ENCODE measurements at regions of chr6 and their contacts with region 1.

Region 1: GRCh38 chr6:3068329-3069214 is at the start of gene RIPK1:
- DNase-seq: peak; percentile 97
- H3K4me3 ChIP-seq: peak within 1 kb of the TSS; percentile 72 to 99 (median 99)
- H3K27ac ChIP-seq: peak within 1 kb of the TSS; percentile 98 to 100 (median 100)
- H3K4me1 ChIP-seq: peaks cover 0 to 44% (median 33%) of the 10 kb centered on the region in 4 donors
- H3K27me3 ChIP-seq: no peaks in the 10 kb centered on the region
- CTCF ChIP-seq: peak in 2 of 4 experiments; percentile 11 to 17
- EP300 ChIP-seq: no peak
- POLR2A ChIP-seq: peak; percentile 77 to 83
- total RNA-seq, gene RIPK1: 19.7 to 27.3 (median 22.7) TPM

Region 2: DNA sequence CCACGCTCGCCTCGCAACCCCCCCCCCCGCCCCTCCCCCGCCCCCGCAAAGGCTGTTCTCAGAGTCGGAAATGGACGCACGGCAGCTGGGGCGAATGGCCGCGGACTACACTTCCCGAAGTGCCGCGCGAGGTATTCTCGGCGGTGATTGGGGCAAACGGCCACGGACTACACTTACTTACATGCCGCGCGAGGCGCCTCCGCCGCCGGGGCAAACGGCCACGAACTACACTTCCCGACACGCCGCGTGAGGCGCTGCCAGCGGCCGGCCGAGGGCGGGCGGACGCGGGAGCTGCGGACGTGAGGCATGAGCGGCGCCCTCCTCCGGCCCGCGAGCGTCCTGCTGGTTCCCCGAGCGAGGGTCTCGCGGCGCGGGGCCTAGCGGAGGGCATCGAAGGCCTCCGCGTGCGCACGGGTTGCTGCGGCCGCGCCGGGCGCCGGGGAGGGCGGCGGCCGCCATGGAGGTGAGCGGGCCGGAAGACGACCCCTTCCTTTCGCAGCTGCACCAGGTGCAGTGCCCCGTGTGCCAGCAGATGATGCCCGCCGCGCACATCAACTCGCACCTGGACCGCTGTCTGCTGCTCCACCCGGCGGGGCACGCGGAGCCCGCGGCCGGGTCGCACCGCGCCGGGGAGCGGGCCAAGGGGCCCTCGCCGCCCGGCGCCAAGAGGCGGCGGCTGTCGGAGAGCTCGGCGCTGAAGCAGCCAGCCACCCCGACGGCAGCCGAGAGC is 303.2 kb before region 1 on chr6 and contains the start of gene WRNIP1:
- intact Hi-C with region 1: loop called (anchors 5 kb)
- DNase-seq: peak; percentile 100
- H3K4me3 ChIP-seq: peak within 1 kb of the TSS; percentile 61 to 96 (median 90)
- H3K27ac ChIP-seq: peak within 1 kb of the TSS; percentile 94 to 98 (median 96)
- H3K4me1 ChIP-seq: peaks cover 0 to 48% (median 36%) of the 10 kb centered on the region in 4 donors
- H3K27me3 ChIP-seq: no peaks in the 10 kb centered on the region
- CTCF ChIP-seq: peak in 3 of 4 experiments; percentile 8 to 67 (median 21)
- EP300 ChIP-seq: no peak
- POLR2A ChIP-seq: no peak
- total RNA-seq, gene WRNIP1: 41.0 to 56.6 (median 47.9) TPM

Region 3: GRCh38 chr6:2848851-2849250 is 219.7 kb before region 1 on chr6:
- intact Hi-C with region 1: loop called (anchors 5 kb)
- DNase-seq: no peak
- H3K4me3 ChIP-seq: no peak overlapping the region
- H3K27ac ChIP-seq: no peak overlapping the region
- H3K4me1 ChIP-seq: peaks cover 0 to 13% (median 7%) of the 10 kb centered on the region in 4 donors
- H3K27me3 ChIP-seq: no peaks in the 10 kb centered on the region
- CTCF ChIP-seq: no peak
- EP300 ChIP-seq: no peak
- POLR2A ChIP-seq: no peak

Region 4: GRCh38 chr6:3031857-3032640 is 36.5 kb before region 1 on chr6:
- intact Hi-C with region 1: no loop called
- DNase-seq: no peak
- H3K4me3 ChIP-seq: no peak overlapping the region
- H3K27ac ChIP-seq: no peak overlapping the region
- H3K4me1 ChIP-seq: no peaks in the 10 kb centered on the region
- H3K27me3 ChIP-seq: no peaks in the 10 kb centered on the region
- CTCF ChIP-seq: no peak
- EP300 ChIP-seq: no peak
- POLR2A ChIP-seq: no peak

Region 5: GRCh38 chr6:3118353-3119039 is 49.9 kb after region 1 on chr6 and contains the start of gene BPHL:
- intact Hi-C with region 1: loop called (anchors 1 kb)
- DNase-seq: peak; percentile 98
- H3K4me3 ChIP-seq: peak within 1 kb of the TSS; percentile 53 to 91 (median 84)
- H3K27ac ChIP-seq: peak within 1 kb of the TSS; percentile 88 to 94 (median 92)
- H3K4me1 ChIP-seq: peaks cover 0 to 13% (median 12%) of the 10 kb centered on the region in 4 donors
- H3K27me3 ChIP-seq: no peaks in the 10 kb centered on the region
- CTCF ChIP-seq: no peak
- EP300 ChIP-seq: no peak
- POLR2A ChIP-seq: peak; percentile 46 to 56
- total RNA-seq, gene BPHL: 8.6 to 11.1 (median 10.5) TPM

Region 6: GRCh38 chr6:3157131-3157927 is 88.8 kb after region 1 on chr6 and contains the start of gene TUBB2A:
- intact Hi-C with region 1: loop called (anchors 5 kb)
- DNase-seq: peak; percentile 95
- H3K4me3 ChIP-seq: peak within 1 kb of the TSS; percentile 66 to 99 (median 71)
- H3K27ac ChIP-seq: peak within 1 kb of the TSS; percentile 90 to 99 (median 96)
- H3K4me1 ChIP-seq: peaks cover 0 to 34% (median 14%) of the 10 kb centered on the region in 4 donors
- H3K27me3 ChIP-seq: no peaks in the 10 kb centered on the region
- CTCF ChIP-seq: peak in 2 of 4 experiments; percentile 12 to 52
- EP300 ChIP-seq: peak in 1 of 4 donors; percentile 45
- POLR2A ChIP-seq: peak; percentile 56 to 81
- total RNA-seq, gene TUBB2A: 54.5 to 106 (median 97.9) TPM

Region 7: GRCh38 chr6:3202999-3203696 is 134.6 kb after region 1 on chr6:
- intact Hi-C with region 1: no loop called
- DNase-seq: no peak
- H3K4me3 ChIP-seq: no peak overlapping the region
- H3K27ac ChIP-seq: no peak overlapping the region
- H3K4me1 ChIP-seq: peaks cover 0 to 3% (median 0%) of the 10 kb centered on the region in 4 donors
- H3K27me3 ChIP-seq: no peaks in the 10 kb centered on the region
- CTCF ChIP-seq: no peak
- EP300 ChIP-seq: no peak
- POLR2A ChIP-seq: no peak

Region 8: DNA sequence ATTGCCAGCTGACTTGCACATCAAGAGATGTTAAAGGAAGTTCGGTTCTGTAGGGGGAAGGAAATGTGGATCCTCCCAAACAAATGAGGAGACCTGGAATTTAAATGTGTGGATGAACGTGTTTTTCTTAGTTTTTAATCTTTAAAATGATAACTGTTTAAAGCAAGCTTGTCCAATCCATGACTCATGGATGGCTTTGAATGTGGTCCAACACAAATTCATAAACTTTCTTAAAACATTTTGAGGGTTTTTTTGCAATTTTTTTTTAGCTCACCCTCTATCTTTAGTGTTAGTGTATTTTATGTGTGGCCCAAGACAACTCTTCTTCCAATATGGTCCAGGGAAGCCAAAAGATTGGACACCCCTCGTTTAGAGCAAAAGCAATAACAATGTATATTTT is 146.3 kb after region 1 on chr6:
- intact Hi-C with region 1: no loop called
- DNase-seq: no peak
- H3K4me3 ChIP-seq: no peak overlapping the region
- H3K27ac ChIP-seq: no peak overlapping the region
- H3K4me1 ChIP-seq: peaks cover 0 to 13% (median 12%) of the 10 kb centered on the region in 4 donors
- H3K27me3 ChIP-seq: no peaks in the 10 kb centered on the region
- CTCF ChIP-seq: no peak
- EP300 ChIP-seq: no peak
- POLR2A ChIP-seq: no peak

Region 9: GRCh38 chr6:3231247-3232016 is 162.9 kb after region 1 on chr6:
- intact Hi-C with region 1: loop called (anchors 5 kb)
- DNase-seq: peak; percentile 91
- H3K4me3 ChIP-seq: peak overlapping the region; percentile 57 to 68 (median 62)
- H3K27ac ChIP-seq: peak overlapping the region; percentile 82 to 91 (median 89)
- H3K4me1 ChIP-seq: peaks cover 0 to 57% (median 49%) of the 10 kb centered on the region in 4 donors
- H3K27me3 ChIP-seq: peaks cover 19 to 70% (median 42%) of the 10 kb centered on the region in 3 donors
- CTCF ChIP-seq: no peak
- EP300 ChIP-seq: peak in 1 of 4 donors; percentile 12
- POLR2A ChIP-seq: peak in 1 of 2 donors; percentile 43

Region 10: GRCh38 chr6:3258720-3259490 is 190.3 kb after region 1 on chr6 and contains the start of gene PSMG4:
- intact Hi-C with region 1: loop called (anchors 5 kb)
- DNase-seq: peak; percentile 97
- H3K4me3 ChIP-seq: peak within 1 kb of the TSS; percentile 73 to 99 (median 86)
- H3K27ac ChIP-seq: peak within 1 kb of the TSS; percentile 75 to 83 (median 80)
- H3K4me1 ChIP-seq: peaks cover 0 to 39% (median 28%) of the 10 kb centered on the region in 4 donors
- H3K27me3 ChIP-seq: no peaks in the 10 kb centered on the region
- CTCF ChIP-seq: no peak
- EP300 ChIP-seq: no peak
- POLR2A ChIP-seq: peak in 1 of 2 donors; percentile 25
- total RNA-seq, gene PSMG4: 26.4 to 39.0 (median 30.6) TPM